ENCODE measurements at regions of chr6 and their contacts with region 1.

Region 1: DNA sequence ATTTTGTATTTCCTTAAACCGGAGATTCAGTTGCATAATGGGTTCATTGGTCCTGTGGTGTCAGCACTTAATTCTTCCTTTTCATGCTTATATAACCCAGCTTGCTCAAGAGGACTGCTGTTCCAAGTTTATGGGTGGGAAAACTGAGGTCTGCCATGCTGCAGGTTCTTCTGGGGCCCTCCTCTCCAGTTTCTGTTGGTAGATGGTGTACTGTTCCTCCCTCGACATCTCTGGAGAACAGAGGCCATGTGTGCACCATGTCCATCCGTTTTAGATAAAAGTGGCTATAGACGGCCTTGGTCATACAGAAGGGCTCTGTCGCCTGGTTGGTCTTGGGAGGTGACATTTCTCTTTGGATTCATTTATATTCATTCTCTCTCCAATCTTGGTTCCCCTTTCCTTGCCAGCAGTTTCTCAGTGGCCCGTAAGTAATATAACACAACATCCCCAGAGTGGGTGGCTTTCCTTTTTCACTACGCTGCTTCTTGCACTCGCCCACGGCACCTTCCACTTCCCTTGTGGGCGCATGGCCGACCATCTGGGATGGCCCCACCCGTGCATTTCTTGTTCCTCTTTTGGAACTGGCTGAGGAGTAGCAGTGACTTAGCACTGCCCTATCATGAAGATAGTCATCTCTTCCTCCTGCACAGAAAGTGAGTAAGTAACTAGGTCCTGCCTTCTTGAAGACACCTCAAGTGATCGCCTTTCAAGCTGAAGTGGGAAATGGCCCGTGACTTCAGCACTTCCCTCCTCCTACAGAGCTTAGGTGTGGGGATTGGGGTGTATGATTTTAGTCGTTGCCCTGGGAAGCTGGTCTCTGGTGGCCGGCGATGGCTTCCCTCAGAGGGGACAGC is 94.2 kb downstream of the RREB1 start:
- DNase-seq: peak in 2 of 3 donors; percentile 63 to 74
- ATAC-seq: peak; percentile 29 to 55 (median 39)
- H3K4me3 ChIP-seq: peak overlapping the region in 1 of 3 donors; percentile 23
- H3K27ac ChIP-seq: peak overlapping the region; percentile 69 to 90 (median 69)
- H3K4me1 ChIP-seq: peaks cover 0 to 24% (median 6%) of the 10 kb centered on the region in 4 donors
- H3K27me3 ChIP-seq: no peaks in the 10 kb centered on the region
- CTCF ChIP-seq: no peak
- POLR2A ChIP-seq: no peak

Region 2: GRCh38 chr6:6905961-6906518 is 295.9 kb before region 1 on chr6:
- intact Hi-C with region 1: no loop called
- DNase-seq: no peak
- ATAC-seq: no peak
- H3K4me3 ChIP-seq: no peak overlapping the region
- H3K27ac ChIP-seq: no peak overlapping the region
- H3K4me1 ChIP-seq: no peaks in the 10 kb centered on the region
- H3K27me3 ChIP-seq: no peaks in the 10 kb centered on the region
- CTCF ChIP-seq: no peak
- POLR2A ChIP-seq: no peak

Region 3: DNA sequence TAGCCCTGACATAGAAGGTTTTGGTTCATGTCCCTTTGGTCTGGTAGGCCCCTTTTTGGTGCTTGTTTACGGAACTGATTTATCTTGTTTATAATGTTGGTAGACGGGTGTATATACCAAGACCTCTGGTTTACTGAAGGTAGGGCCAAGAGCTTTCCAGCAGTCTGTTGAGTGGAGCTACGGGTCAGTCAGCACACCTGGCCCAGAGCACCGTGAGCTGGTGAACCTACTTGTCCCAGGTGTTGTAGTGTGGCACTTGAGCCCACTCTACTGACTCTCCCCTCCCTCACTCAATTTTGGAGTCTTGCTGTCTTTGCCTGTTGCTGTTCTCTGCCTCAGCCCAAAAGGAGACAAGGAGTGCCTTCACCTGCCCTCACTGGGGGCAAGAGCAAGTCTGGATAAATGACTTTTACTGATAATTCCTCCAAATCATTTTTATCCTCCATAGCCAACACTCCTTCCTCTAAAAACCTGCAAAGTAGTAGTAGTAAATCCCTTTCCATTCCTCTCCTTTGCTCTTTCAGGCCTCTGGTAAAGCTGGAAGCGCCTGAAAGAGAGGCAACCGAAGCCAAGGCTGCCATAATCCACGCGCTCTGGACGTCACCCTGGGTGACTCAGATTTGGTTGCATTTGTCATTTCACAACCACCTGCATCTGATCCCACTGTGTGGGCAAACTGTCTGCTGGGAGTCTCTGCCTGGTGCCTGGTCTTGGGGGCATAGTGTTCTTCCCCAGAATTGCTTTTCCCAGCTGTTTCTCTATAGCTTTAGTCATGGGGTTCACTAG is 71.9 kb before region 1 on chr6:
- intact Hi-C with region 1: no loop called
- DNase-seq: peak; percentile 84 to 88 (median 86)
- ATAC-seq: peak; percentile 88 to 92 (median 90)
- H3K4me3 ChIP-seq: no peak overlapping the region
- H3K27ac ChIP-seq: peak overlapping the region; percentile 82 to 96 (median 91)
- H3K4me1 ChIP-seq: peaks cover 0 to 69% (median 14%) of the 10 kb centered on the region in 4 donors
- H3K27me3 ChIP-seq: no peaks in the 10 kb centered on the region
- CTCF ChIP-seq: no peak
- POLR2A ChIP-seq: no peak

Region 4: GRCh38 chr6:7154341-7155139 is 47.4 kb before region 1 on chr6:
- intact Hi-C with region 1: loop called in 1 of 2 experiments (anchors 10 kb)
- DNase-seq: no peak
- ATAC-seq: no peak
- H3K4me3 ChIP-seq: no peak overlapping the region
- H3K27ac ChIP-seq: peak overlapping the region in 2 of 3 donors; percentile 19 to 41
- H3K4me1 ChIP-seq: peaks cover 0 to 82% (median 24%) of the 10 kb centered on the region in 4 donors
- H3K27me3 ChIP-seq: no peaks in the 10 kb centered on the region
- CTCF ChIP-seq: no peak
- POLR2A ChIP-seq: no peak

Measured in right lobe of liver (tissue), 6 donors.